ENCODE measurements at regions of chr17 and their contacts with region 1.

Region 1: GRCh38 chr17:2244545-2245525 is 58.8 kb downstream of the SMG6 start:
- DNase-seq: peak; percentile 83
- ATAC-seq: peak; percentile 68
- H3K4me3 ChIP-seq: no peak overlapping the region
- H3K4me3 Mint-ChIP-seq: no peak overlapping the region
- H3K27ac ChIP-seq: no peak overlapping the region
- H3K27ac Mint-ChIP-seq: peak overlapping the region; percentile 1
- H3K4me1 ChIP-seq: peaks cover 8 to 9% of the 10 kb centered on the region in 2 donors
- H3K4me1 Mint-ChIP-seq: peaks cover 11% of the 10 kb centered on the region
- H3K27me3 ChIP-seq: no peaks in the 10 kb centered on the region
- H3K27me3 Mint-ChIP-seq: no peaks in the 10 kb centered on the region
- CTCF ChIP-seq: peak; percentile 96

Region 2: DNA sequence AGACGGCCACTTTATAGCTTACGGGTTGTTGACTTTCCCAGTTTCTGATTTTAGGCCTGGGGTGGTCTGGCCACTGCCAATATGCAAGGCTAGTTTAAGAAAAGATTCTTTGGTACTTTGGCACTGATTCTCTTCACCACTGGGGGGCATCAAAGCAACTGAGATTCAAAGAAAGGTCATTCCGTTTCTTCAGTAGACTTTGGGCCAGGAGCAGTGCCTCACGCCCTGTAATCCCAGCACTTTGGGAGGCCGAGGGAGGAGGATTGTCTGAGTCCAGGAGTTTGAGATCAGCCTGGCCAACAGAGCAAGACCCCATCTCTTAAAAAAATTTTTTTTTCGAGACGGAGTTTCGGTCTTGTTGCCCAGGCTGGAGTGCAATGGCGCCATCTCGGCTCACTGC is 362.0 kb before region 1 on chr17:
- CTCF ChIA-PET with region 1: interaction called, 27 read pairs
- POLR2A ChIA-PET with region 1: no interaction called
- intact Hi-C with region 1: no loop called
- DNase-seq: peak; percentile 55
- ATAC-seq: peak; percentile 53
- H3K4me3 ChIP-seq: no peak overlapping the region
- H3K4me3 Mint-ChIP-seq: no peak overlapping the region
- H3K27ac ChIP-seq: no peak overlapping the region
- H3K27ac Mint-ChIP-seq: no peak overlapping the region
- H3K4me1 ChIP-seq: no peaks in the 10 kb centered on the region
- H3K4me1 Mint-ChIP-seq: no peaks in the 10 kb centered on the region
- H3K27me3 ChIP-seq: no peaks in the 10 kb centered on the region
- H3K27me3 Mint-ChIP-seq: no peaks in the 10 kb centered on the region
- CTCF ChIP-seq: peak; percentile 60

Region 3: DNA sequence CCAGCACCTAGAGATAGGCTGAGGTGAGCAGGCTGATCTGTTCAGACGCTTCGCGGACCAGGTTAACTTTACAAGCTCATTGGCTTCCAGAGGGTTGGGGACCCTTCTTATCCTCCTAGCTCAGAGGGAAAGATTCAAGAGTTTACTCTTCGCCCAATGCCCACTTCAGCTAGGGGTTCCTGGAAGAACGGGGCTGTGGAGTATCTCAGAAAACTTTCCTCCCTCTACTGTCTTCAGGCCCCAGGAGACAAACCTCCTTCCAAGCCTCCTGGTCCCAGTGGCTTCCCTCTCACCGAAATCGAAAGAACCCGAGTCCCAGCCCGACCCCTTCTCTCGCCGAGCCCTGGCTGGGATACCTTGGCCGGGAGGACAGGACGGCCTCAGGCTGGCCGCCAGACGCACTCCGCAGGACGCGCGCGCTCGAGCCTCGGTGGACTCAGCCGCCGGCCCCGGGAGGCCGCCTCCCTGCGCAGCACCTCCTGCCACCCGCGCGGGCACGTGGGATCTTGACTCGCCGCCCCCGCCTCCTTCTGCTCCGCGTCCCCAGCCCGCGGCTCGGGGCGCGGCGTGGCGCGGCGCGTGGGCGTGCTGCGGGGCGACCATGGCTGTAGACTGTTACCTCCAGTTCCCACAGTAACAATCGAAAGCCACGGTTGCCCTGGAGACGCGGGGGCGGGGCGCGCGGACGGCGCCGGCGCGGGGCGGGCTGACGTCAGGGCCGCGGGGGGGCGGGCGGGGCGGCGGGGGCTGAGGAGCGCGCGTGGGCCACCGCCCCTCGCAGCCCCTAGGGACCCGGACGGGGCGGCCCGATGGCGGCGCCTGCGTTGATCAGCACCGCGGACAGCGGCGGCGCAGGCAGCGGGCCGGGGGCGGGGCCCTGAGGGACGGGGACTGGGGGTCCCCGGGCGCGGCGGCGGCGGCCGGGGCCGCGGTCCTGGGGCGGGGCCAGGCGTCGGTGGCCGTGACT is 195.2 kb before region 1 on chr17:
- CTCF ChIA-PET with region 1: interaction called, 330 read pairs
- POLR2A ChIA-PET with region 1: interaction called, 5 read pairs
- intact Hi-C with region 1: loop called (anchors 1 kb)
- DNase-seq: peak; percentile 94
- ATAC-seq: peak; percentile 84
- H3K4me3 ChIP-seq: peak overlapping the region; percentile 45 to 74 (median 59)
- H3K4me3 Mint-ChIP-seq: peak overlapping the region; percentile 78
- H3K27ac ChIP-seq: peak overlapping the region in 1 of 2 donors; percentile 47
- H3K27ac Mint-ChIP-seq: peak overlapping the region; percentile 61
- H3K4me1 ChIP-seq: peaks cover 40 to 52% of the 10 kb centered on the region in 2 donors
- H3K4me1 Mint-ChIP-seq: peaks cover 30% of the 10 kb centered on the region
- H3K27me3 ChIP-seq: peaks cover 0 to 60% (median 18%) of the 10 kb centered on the region in 4 experiments
- H3K27me3 Mint-ChIP-seq: peaks cover 11% of the 10 kb centered on the region
- CTCF ChIP-seq: no peak

Region 4: DNA sequence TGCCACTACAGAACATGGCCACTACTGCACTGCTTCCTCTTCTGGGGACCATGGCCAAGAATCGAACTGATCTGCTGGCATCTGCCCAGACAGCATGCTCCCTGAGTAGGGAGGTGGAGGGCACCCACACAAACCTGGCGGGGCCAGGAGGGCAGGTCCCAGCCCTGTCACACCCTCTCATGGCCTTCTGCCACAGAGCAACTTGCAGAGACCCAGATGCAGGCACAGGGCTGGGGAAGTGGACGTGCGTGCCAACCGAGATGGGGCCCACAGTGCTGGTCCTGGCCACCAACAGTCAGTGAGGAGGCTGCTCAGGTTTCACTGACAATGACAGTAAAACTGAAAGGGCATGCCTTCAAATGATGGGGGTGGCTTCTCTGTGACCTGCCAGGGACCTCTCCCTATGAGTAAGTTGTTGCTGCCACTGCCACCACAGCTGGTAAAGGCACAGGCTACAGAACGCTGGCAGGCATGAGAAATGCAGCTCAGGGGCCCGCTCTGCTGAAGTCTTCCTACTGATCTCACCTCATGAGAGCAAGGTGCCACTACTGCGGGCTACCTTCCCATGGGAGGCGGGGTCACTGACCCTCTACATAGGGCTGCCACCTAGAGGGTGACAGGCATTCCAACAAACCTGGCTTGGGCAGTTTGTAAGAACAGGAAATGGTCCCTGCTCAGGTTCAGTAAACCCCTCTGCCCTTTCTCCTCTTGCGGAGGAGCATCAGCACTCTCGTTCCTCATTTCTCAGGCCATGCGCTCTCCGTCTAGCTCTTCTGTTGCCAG is 174.4 kb before region 1 on chr17:
- CTCF ChIA-PET with region 1: interaction called, 12 read pairs
- POLR2A ChIA-PET with region 1: no interaction called
- intact Hi-C with region 1: no loop called
- DNase-seq: peak; percentile 33
- ATAC-seq: peak; percentile 71
- H3K4me3 ChIP-seq: no peak overlapping the region
- H3K4me3 Mint-ChIP-seq: no peak overlapping the region
- H3K27ac ChIP-seq: no peak overlapping the region
- H3K27ac Mint-ChIP-seq: peak overlapping the region; percentile 50
- H3K4me1 ChIP-seq: peaks cover 2 to 26% of the 10 kb centered on the region in 2 donors
- H3K4me1 Mint-ChIP-seq: peaks cover 28% of the 10 kb centered on the region
- H3K27me3 ChIP-seq: no peaks in the 10 kb centered on the region
- H3K27me3 Mint-ChIP-seq: no peaks in the 10 kb centered on the region
- CTCF ChIP-seq: no peak

Region 5: GRCh38 chr17:2137342-2138098 is 107.3 kb before region 1 on chr17:
- CTCF ChIA-PET with region 1: interaction called, 4 read pairs
- POLR2A ChIA-PET with region 1: no interaction called
- intact Hi-C with region 1: loop called (anchors 10 kb)
- DNase-seq: peak; percentile 39
- ATAC-seq: peak; percentile 64
- H3K4me3 ChIP-seq: no peak overlapping the region
- H3K4me3 Mint-ChIP-seq: peak overlapping the region; percentile 27
- H3K27ac ChIP-seq: no peak overlapping the region
- H3K27ac Mint-ChIP-seq: no peak overlapping the region
- H3K4me1 ChIP-seq: peaks cover 18 to 20% of the 10 kb centered on the region in 2 donors
- H3K4me1 Mint-ChIP-seq: peaks cover 22% of the 10 kb centered on the region
- H3K27me3 ChIP-seq: no peaks in the 10 kb centered on the region
- H3K27me3 Mint-ChIP-seq: no peaks in the 10 kb centered on the region
- CTCF ChIP-seq: no peak

Region 6: DNA sequence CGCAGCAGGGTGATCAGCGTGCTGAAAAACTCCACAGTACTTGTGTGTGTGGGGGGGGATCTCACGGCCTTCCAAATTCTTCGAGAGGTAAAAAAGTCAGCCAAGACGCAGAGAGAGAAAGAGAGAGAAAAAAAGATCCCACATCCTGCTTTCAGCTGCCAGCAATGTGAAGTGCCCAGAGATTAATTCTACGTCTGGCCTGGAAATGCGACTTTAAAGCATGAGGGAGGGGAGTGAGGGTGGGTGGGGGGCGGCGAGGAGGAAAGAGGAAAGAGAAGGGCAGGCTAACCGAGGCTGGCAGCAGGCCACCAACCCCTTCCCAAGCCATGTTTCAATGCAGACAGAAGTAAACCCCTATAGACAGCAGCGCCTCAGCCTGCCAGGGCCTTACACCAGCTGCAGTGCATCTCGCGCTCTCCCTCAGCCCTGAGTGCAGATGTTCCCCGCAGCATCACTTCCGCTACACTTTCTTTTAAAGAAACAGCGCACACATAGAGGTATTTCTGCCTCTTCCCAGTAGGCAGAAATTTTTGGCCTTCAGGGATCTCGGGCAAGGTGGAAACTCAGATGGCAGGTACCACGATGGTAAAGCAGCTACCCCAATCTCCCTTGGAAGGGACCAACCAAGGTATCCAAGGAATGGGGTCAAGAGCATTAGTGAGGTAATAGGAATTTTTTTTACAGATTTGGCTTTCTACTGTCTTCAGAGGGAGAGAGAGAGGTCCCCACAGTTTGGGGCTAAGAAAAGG is 29.0 kb before region 1 on chr17:
- CTCF ChIA-PET with region 1: interaction called, 9 read pairs
- POLR2A ChIA-PET with region 1: no interaction called
- intact Hi-C with region 1: loop called (anchors 2 kb)
- DNase-seq: peak; percentile 79
- ATAC-seq: peak; percentile 98
- H3K4me3 ChIP-seq: peak overlapping the region in 4 of 5 experiments; percentile 11 to 58 (median 38)
- H3K4me3 Mint-ChIP-seq: peak overlapping the region; percentile 80
- H3K27ac ChIP-seq: peak overlapping the region; percentile 64 to 91
- H3K27ac Mint-ChIP-seq: peak overlapping the region; percentile 78
- H3K4me1 ChIP-seq: peaks cover 20 to 26% of the 10 kb centered on the region in 2 donors
- H3K4me1 Mint-ChIP-seq: peaks cover 31% of the 10 kb centered on the region
- H3K27me3 ChIP-seq: no peaks in the 10 kb centered on the region
- H3K27me3 Mint-ChIP-seq: no peaks in the 10 kb centered on the region
- CTCF ChIP-seq: no peak

Region 7: DNA sequence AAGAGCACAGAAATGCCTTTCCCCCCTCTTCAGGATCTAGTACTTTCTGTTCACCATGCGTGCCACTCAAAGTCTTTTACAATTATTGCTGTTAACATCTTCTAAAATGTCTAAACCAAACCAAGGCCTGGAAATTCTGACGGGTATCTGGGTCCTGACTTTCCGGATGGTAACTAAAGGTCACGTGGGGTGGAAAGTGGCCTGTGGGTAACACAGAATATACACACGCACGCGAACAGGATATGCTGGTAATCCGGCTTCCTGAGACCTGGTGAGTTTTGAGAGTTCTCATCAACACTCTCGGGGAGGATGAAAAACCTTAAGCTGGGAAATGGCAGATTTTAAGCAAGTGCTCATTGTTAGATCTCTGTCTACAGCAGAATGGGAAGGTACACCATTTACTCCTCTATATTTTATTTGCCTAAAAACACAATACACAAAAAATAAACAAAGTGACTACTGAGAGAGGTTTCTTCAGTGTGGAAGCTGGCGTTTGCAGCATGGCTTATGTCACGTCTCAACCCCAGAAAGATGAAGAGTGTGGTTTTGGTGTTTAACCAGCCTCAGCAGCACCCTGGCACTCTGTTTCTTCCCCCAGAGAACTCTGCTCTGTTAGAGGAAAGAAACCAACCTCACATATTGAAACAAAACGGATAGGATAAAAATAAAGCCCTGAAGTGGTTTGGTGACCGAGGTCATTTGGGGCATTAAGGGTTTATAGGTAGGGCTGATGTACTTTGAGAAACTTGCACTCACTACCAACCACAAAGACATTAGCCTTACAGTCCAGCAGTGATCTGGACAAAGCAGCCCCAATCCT is 21.4 kb after region 1 on chr17:
- CTCF ChIA-PET with region 1: interaction called, 20 read pairs
- POLR2A ChIA-PET with region 1: no interaction called
- intact Hi-C with region 1: no loop called
- DNase-seq: peak; percentile 69
- ATAC-seq: peak; percentile 83
- H3K4me3 ChIP-seq: peak overlapping the region in 2 of 5 experiments; percentile 26 to 27
- H3K4me3 Mint-ChIP-seq: peak overlapping the region; percentile 80
- H3K27ac ChIP-seq: peak overlapping the region; percentile 78 to 90
- H3K27ac Mint-ChIP-seq: peak overlapping the region; percentile 90
- H3K4me1 ChIP-seq: peaks cover 15 to 22% of the 10 kb centered on the region in 2 donors
- H3K4me1 Mint-ChIP-seq: peaks cover 17% of the 10 kb centered on the region
- H3K27me3 ChIP-seq: no peaks in the 10 kb centered on the region
- H3K27me3 Mint-ChIP-seq: no peaks in the 10 kb centered on the region
- CTCF ChIP-seq: no peak

Region 8: DNA sequence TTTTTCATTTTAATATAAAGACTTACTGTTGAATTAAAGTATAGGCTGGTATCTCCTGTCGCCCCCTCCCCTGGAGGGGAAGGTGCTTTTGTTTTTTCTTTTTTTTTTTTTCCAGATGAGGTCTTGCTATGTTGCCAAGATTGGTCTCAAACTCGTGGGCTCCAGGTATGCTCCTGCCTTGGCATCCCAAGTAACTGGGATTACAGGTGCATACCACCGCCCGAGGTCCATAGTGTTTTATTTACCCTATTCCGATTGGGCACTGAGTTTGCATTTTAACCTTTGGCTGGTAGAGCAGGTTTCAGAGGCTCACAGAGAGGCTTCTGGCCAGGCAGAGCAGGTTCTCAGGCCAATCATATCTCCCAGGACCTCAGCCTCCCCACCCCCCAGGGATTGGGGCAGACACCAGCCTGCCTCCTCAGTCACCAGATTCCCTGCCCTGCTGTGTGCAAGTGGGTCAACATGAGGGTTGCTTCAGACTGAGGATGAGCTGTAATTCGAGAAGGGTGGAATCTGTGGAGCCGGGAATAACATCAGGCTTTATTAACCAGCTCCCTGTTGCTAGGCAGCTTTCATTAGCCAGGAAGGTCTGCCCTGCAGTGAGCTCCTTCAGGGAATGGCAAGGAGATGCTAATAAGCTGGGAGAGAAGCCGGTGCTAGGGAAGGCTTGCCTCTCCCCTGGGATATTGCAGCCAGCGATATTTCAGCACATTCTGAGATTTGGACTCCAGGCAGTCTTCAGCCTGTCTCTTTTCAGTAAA is 102.9 kb after region 1 on chr17:
- CTCF ChIA-PET with region 1: no interaction called
- POLR2A ChIA-PET with region 1: no interaction called
- intact Hi-C with region 1: no loop called
- DNase-seq: no peak
- ATAC-seq: no peak
- H3K4me3 ChIP-seq: no peak overlapping the region
- H3K4me3 Mint-ChIP-seq: no peak overlapping the region
- H3K27ac ChIP-seq: no peak overlapping the region
- H3K27ac Mint-ChIP-seq: no peak overlapping the region
- H3K4me1 ChIP-seq: no peaks in the 10 kb centered on the region
- H3K4me1 Mint-ChIP-seq: no peaks in the 10 kb centered on the region
- H3K27me3 ChIP-seq: no peaks in the 10 kb centered on the region
- H3K27me3 Mint-ChIP-seq: no peaks in the 10 kb centered on the region
- CTCF ChIP-seq: no peak

Region 9: DNA sequence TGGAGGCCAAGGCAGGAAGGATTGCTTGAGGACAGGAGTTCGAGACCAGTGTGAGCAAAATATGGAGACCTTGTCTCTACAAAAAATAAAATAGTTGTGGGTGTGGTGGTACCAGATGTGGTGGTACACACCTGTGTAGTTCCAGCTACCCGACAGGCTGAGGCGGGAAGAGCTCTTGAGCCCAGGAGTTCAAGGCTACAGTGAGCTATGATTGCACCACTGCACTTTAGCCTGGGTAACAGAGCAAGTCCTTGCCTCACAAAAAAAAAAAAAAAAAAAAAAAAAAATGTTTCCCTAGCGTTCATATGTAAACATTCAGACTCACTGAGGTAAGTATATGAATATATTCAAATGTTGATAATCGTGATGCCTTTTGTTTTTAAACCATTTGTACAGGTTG is 427.2 kb after region 1 on chr17:
- CTCF ChIA-PET with region 1: no interaction called
- POLR2A ChIA-PET with region 1: no interaction called
- intact Hi-C with region 1: no loop called
- DNase-seq: no peak
- ATAC-seq: no peak
- H3K4me3 ChIP-seq: no peak overlapping the region
- H3K4me3 Mint-ChIP-seq: no peak overlapping the region
- H3K27ac ChIP-seq: peak overlapping the region in 1 of 2 donors; percentile 9
- H3K27ac Mint-ChIP-seq: no peak overlapping the region
- H3K4me1 ChIP-seq: no peaks in the 10 kb centered on the region
- H3K4me1 Mint-ChIP-seq: peaks cover 3% of the 10 kb centered on the region
- H3K27me3 ChIP-seq: no peaks in the 10 kb centered on the region
- H3K27me3 Mint-ChIP-seq: no peaks in the 10 kb centered on the region
- CTCF ChIP-seq: no peak